PC-9 (cell line): ENCODE measurements at regions of chr4 and their contacts with region 1.

Region 1: GRCh38 chr4:85986266-85986665 is 373.6 kb downstream of the MAPK10 start:
- DNase-seq: no peak
- H3K4me3 ChIP-seq: no peak overlapping the region
- H3K27ac ChIP-seq: no peak overlapping the region
- H3K4me1 ChIP-seq: no peaks in the 10 kb centered on the region
- H3K27me3 ChIP-seq: no peaks in the 10 kb centered on the region
- CTCF ChIP-seq: no peak

Region 2: DNA sequence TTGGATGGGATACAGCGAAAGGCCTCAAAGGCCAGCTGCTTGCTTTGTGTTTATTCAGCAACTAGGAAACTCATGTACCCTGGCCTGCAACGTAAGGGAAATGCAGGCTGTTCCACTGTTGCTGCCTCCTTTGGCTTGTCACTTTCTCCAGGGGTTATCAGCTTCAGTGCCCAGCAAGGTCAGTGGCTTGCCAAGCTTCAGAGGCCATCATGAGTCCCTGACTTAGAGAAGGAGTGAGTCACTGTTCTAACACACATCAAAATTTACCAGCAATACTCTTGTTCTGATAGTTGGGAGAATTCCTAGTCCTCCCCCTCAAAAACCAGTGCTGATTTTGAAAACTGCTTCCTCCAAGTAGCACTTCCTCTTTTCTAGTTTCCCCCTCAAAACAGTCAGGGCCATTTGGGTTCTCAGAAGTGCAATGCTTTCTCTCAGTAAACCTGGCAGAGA is 260.5 kb before region 1 on chr4:
- CTCF ChIA-PET with region 1: no interaction called
- POLR2A ChIA-PET with region 1: no interaction called
- intact Hi-C with region 1: no loop called
- DNase-seq: no peak
- H3K4me3 ChIP-seq: no peak overlapping the region
- H3K27ac ChIP-seq: no peak overlapping the region
- H3K4me1 ChIP-seq: no peaks in the 10 kb centered on the region
- H3K27me3 ChIP-seq: no peaks in the 10 kb centered on the region
- CTCF ChIP-seq: no peak

Region 3: DNA sequence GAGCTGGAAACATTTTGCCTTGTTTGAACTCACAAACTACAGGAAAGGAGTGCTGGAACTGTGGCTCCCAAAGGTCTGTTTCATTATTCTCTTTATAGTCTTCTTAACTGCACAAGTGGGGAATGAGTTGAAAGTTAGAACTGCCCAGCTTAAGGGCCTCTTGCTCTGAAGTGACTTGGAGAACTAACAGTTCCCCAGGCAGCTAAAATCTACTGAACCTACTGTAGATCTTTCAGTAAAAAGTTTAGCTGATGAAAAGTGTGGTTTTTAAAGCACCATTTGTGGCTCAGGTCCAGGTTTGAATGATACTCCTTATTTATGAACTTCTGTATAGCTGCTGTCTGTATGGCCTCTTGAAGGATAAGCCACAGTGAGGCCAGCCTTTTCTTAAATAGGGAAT is 19.8 kb after region 1 on chr4:
- CTCF ChIA-PET with region 1: no interaction called
- POLR2A ChIA-PET with region 1: no interaction called
- intact Hi-C with region 1: loop called (anchors 2 kb)
- DNase-seq: no peak
- H3K4me3 ChIP-seq: no peak overlapping the region
- H3K27ac ChIP-seq: no peak overlapping the region
- H3K4me1 ChIP-seq: no peaks in the 10 kb centered on the region
- H3K27me3 ChIP-seq: no peaks in the 10 kb centered on the region
- CTCF ChIP-seq: no peak

Region 4: GRCh38 chr4:86855573-86855992 is 869.3 kb after region 1 on chr4:
- CTCF ChIA-PET with region 1: no interaction called
- POLR2A ChIA-PET with region 1: no interaction called
- intact Hi-C with region 1: no loop called
- DNase-seq: peak; percentile 24 to 78
- H3K4me3 ChIP-seq: peak overlapping the region; percentile 13; the same call in 1 of the 2 replicates
- H3K27ac ChIP-seq: peak overlapping the region; percentile 51
- H3K4me1 ChIP-seq: peaks cover 30% of the 10 kb centered on the region
- H3K27me3 ChIP-seq: no peaks in the 10 kb centered on the region
- CTCF ChIP-seq: no peak; the same call in 1 of the 2 replicates